ENCODE measurements at regions of chr12 and their contacts with region 1.

Region 1: DNA sequence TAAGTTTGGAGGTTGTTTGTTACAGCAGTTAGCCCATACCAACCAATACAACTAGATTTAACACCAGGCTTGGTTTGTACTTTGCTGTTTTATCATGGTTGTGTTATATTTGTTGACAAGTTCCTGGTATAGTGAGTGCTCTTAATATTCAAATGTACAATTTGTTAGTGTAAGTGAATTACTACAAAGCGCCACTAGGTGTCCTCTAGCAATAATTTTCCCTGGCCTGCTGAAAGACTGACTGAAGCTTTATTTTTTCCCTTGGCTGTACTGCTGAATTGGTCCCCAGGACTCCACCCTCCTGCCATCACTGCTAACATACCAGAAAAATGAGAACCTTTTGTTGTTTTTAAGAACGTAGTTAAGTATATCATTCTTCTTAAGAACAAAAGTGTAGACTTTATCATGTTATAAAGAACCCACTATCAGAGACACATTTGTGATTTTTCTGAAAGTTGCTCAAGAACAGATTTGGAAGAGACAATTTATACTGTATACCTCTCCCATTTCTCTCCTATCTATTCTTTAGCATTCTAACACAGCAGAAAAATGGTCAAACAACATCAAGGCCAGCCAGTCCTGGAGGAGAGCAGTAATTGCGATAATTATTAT is 75.3 kb upstream of the FAR2 start:
- DNase-seq: no peak
- ATAC-seq: peak; percentile 79 to 89 (median 82)
- H3K4me3 ChIP-seq: no peak overlapping the region
- H3K27ac ChIP-seq: no peak overlapping the region
- H3K4me1 ChIP-seq: no peaks in the 10 kb centered on the region
- H3K27me3 ChIP-seq: no peaks in the 10 kb centered on the region
- CTCF ChIP-seq: peak; percentile 57 to 68 (median 64)
- POLR2A ChIP-seq: no peak

Region 2: DNA sequence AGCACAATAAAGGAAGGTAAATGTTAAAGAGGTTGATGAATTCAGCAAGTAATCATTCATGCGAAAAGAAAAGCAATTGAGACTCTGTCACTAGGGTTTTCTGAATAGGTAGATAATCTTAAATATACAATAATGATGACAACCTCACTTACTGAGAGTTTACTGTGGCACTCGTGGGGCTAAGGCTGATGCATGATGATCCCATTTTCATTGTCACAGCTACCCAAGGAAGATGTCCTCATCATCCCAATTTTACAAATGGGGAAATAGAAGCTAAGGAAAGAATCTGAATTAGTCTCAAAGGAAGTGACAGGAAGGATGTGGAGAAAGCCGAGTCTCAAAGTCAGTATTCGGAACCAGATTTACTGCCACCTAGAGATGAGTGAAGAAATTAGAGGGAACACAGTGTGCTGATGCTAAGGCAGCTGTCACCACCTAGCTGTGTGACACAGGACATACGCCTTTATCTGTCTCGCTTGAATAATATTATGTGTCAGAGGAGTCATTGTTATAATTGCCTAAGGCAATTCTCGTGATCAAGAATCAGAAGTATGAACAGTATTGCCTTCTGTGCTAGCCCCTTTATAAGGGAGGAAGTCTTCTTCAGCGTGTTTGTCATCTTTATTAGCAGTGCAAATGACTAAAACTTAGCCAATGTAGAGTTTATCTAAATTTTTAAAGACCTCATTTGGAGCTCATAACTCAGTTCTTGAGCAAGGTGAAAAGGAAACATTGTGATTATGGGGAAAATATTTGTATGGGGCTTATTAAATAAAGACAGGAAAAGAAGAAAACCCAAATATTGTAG is 244.0 kb after region 1 on chr12:
- intact Hi-C with region 1: loop called in 1 of 2 experiments (anchors 5 kb)
- DNase-seq: no peak
- ATAC-seq: peak; percentile 95 to 99 (median 96)
- H3K4me3 ChIP-seq: no peak overlapping the region
- H3K27ac ChIP-seq: no peak overlapping the region
- H3K4me1 ChIP-seq: peaks cover 0 to 13% (median 0%) of the 10 kb centered on the region in 4 donors
- H3K27me3 ChIP-seq: no peaks in the 10 kb centered on the region
- CTCF ChIP-seq: peak; percentile 78 to 90 (median 80)
- POLR2A ChIP-seq: no peak

Measured in right lobe of liver (tissue), 6 donors.